H1 (cell line): ENCODE measurements at regions of chr2 and their contacts with region 1.

Region 1: GRCh38 chr2:117958186-117958585 is 55.7 kb downstream of the CCDC93 start:
- DNase-seq: no peak
- H3K4me3 ChIP-seq: no peak overlapping the region
- H3K27ac ChIP-seq: no peak overlapping the region
- H3K4me1 ChIP-seq: no peaks in the 10 kb centered on the region
- H3K27me3 ChIP-seq: no peaks in the 10 kb centered on the region
- CTCF ChIP-seq: no peak
- EP300 ChIP-seq: no peak
- POLR2A ChIP-seq: no peak
- RAD21 ChIP-seq: no peak

Region 2: GRCh38 chr2:117738991-117739839 is 219.0 kb before region 1 on chr2:
- CTCF ChIA-PET with region 1: no interaction called
- POLR2A ChIA-PET with region 1: no interaction called
- DNase-seq: no peak
- H3K4me3 ChIP-seq: no peak overlapping the region
- H3K27ac ChIP-seq: no peak overlapping the region
- H3K4me1 ChIP-seq: no peaks in the 10 kb centered on the region
- H3K27me3 ChIP-seq: no peaks in the 10 kb centered on the region
- CTCF ChIP-seq: no peak
- EP300 ChIP-seq: no peak
- POLR2A ChIP-seq: no peak
- RAD21 ChIP-seq: no peak

Region 3: DNA sequence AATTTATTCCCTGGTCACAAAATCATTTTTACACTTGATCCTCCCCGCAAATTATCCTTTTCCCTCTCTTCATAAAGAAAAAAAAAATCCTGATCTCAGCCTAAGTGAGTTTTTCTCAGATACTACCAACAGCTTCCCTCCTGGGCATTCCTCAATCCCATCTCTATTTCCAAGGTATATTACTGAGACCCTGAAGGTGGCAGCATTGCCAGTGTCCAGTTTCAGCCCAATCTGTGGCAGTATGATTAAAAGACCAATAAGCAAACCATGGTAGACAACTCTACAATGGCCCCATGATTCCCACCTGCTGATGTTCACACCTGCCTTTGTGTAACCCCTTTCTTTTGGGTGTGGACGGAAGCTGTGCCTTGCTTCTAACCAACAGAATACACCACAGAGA is 10.5 kb after region 1 on chr2:
- CTCF ChIA-PET with region 1: interaction called, 12 read pairs
- POLR2A ChIA-PET with region 1: no interaction called
- DNase-seq: no peak
- H3K4me3 ChIP-seq: no peak overlapping the region
- H3K27ac ChIP-seq: no peak overlapping the region
- H3K4me1 ChIP-seq: no peaks in the 10 kb centered on the region
- H3K27me3 ChIP-seq: no peaks in the 10 kb centered on the region
- CTCF ChIP-seq: no peak
- EP300 ChIP-seq: no peak
- POLR2A ChIP-seq: no peak
- RAD21 ChIP-seq: no peak

Region 4: GRCh38 chr2:117980783-117981676 is 22.8 kb after region 1 on chr2:
- CTCF ChIA-PET with region 1: interaction called, 10 read pairs
- POLR2A ChIA-PET with region 1: no interaction called
- DNase-seq: no peak
- H3K4me3 ChIP-seq: no peak overlapping the region
- H3K27ac ChIP-seq: no peak overlapping the region
- H3K4me1 ChIP-seq: no peaks in the 10 kb centered on the region; a peak in 1 of 7 replicates
- H3K27me3 ChIP-seq: no peaks in the 10 kb centered on the region
- CTCF ChIP-seq: no peak
- EP300 ChIP-seq: no peak
- POLR2A ChIP-seq: no peak
- RAD21 ChIP-seq: no peak

Region 5: DNA sequence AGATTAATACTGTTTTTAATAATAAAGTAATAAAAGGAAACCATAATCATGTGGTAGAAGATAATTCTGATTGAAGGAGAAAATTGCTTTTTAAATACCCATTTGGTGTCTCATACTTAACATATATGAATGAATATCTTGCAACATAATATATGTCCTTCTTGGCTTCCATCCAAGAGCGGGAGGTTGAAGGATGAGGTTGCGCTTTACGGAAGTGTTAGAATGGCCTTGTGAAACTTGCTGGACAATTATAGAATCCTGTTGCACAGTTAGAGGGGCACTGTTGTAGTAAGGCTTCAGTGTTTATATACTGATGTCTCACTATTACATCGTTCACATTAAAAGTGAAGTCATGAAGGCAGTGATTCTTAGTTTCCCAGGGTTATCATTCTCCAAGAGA is 139.5 kb after region 1 on chr2:
- CTCF ChIA-PET with region 1: no interaction called
- POLR2A ChIA-PET with region 1: no interaction called
- DNase-seq: no peak
- H3K4me3 ChIP-seq: no peak overlapping the region
- H3K27ac ChIP-seq: no peak overlapping the region
- H3K4me1 ChIP-seq: peaks cover 0 to 3% (median 0%) of the 10 kb centered on the region in 4 experiments; a peak in 1 of 7 replicates
- H3K27me3 ChIP-seq: no peaks in the 10 kb centered on the region
- CTCF ChIP-seq: no peak
- EP300 ChIP-seq: no peak
- POLR2A ChIP-seq: no peak
- RAD21 ChIP-seq: no peak

Region 6: GRCh38 chr2:118154176-118154575 is 196.0 kb after region 1 on chr2:
- CTCF ChIA-PET with region 1: no interaction called
- POLR2A ChIA-PET with region 1: no interaction called
- DNase-seq: no peak
- H3K4me3 ChIP-seq: no peak overlapping the region
- H3K27ac ChIP-seq: no peak overlapping the region
- H3K4me1 ChIP-seq: no peaks in the 10 kb centered on the region
- H3K27me3 ChIP-seq: no peaks in the 10 kb centered on the region
- CTCF ChIP-seq: no peak
- EP300 ChIP-seq: no peak
- POLR2A ChIP-seq: no peak
- RAD21 ChIP-seq: no peak

Region 7: DNA sequence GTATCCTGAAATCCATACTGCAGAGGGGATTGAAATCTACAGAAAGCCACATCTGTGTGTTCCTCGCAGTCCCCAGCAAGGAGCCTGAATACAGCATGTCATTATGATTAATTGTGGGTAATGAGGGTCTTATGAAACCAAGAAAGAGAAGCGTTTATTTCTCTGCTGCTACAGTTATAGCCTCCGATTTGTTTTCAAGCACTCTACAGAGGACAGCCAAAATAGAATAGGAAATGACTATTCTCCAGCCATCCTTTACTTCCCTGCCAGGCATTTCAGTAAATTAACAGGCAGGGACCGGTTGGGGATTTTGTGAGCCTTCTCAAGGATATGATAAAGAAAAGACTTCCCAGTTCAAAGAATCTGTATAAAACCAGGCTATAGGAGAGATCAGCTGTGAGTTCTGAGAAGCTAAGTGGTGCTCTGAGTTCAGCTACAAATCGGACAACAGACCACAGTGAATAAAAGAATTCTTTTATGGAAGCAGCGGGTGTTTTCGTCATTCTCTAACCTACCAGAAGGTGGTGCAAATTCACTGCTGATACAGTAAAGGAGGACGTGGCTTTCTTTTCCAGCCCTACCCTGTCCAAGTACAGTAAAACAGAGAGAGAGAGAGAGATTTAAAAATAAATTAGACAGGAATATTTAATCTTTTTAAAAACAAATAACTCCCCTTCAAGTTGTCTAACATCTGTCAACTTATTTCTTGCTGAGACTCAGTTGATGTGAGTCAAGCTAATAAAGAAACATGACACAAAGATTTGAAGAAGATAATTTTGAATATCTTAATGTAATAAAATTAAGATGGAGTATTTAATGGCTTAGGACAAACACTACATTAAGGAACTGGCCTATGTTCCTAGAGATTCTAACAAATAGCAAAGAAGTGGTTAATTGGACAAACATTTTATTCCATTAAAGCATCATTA is 263.7 kb after region 1 on chr2:
- CTCF ChIA-PET with region 1: no interaction called
- POLR2A ChIA-PET with region 1: no interaction called
- DNase-seq: peak in 1 of 2 experiments; percentile 52
- H3K4me3 ChIP-seq: no peak overlapping the region
- H3K27ac ChIP-seq: no peak overlapping the region
- H3K4me1 ChIP-seq: peaks cover 0 to 7% (median 5%) of the 10 kb centered on the region in 4 experiments; a peak in 5 of 7 replicates
- H3K27me3 ChIP-seq: peaks cover 0 to 22% (median 16%) of the 10 kb centered on the region in 4 experiments; a peak in 6 of 7 replicates
- CTCF ChIP-seq: peak in 2 of 3 experiments; percentile 68; a peak in 3 of 4 replicates
- EP300 ChIP-seq: no peak
- POLR2A ChIP-seq: no peak
- RAD21 ChIP-seq: peak; percentile 91 to 94